Activated CD4-positive, alpha-beta memory T cell treated with anti-CD3 and anti-CD28 coated beads, Interleukin-2, amount 10 ng/mL, durations not matched to agents 7 days and 5 days (primary cell): ENCODE measurements at regions of chr20 and their contacts with region 1.

Region 1: DNA sequence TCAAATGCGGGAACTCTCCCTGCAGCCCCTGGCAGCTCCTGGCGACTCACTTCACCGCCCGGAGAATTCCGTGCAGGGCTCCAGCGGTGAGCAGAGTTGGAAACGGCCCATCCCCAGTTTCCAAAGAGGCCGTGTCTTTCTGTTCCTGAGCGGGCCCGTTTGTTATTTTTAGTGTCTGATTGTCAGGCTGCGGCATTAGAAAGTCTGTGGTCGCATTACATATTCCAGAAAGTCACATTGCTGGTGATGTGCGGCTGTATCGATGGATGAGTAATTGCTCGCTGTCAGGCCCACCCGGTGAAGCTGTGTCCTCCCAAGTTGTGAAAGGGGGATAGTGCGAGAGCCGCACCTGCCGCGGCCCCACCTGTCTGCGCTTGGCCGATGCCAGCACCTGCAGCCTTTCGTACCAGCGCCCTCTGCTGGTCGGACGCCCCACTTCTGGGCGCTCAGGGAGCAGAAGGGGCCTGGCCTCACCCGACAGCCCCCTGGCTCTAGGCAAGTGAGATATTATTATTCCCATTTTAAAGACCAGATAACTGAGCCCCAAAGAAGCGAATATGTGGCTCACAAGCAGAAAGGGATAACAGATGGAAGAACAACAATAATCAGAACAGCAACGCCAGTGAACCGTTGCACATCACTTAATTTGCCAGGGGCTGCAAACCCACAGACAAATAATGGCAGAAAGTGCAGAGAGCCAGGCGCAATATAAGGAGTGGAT is 244.9 kb downstream of the TSHZ2 start:
- DNase-seq: peak; percentile 78
- H3K4me3 Mint-ChIP-seq: peak overlapping the region; percentile 30
- H3K27ac Mint-ChIP-seq: no peak overlapping the region
- H3K4me1 Mint-ChIP-seq: peaks cover 32% of the 10 kb centered on the region
- H3K27me3 Mint-ChIP-seq: no peaks in the 10 kb centered on the region

Region 2: DNA sequence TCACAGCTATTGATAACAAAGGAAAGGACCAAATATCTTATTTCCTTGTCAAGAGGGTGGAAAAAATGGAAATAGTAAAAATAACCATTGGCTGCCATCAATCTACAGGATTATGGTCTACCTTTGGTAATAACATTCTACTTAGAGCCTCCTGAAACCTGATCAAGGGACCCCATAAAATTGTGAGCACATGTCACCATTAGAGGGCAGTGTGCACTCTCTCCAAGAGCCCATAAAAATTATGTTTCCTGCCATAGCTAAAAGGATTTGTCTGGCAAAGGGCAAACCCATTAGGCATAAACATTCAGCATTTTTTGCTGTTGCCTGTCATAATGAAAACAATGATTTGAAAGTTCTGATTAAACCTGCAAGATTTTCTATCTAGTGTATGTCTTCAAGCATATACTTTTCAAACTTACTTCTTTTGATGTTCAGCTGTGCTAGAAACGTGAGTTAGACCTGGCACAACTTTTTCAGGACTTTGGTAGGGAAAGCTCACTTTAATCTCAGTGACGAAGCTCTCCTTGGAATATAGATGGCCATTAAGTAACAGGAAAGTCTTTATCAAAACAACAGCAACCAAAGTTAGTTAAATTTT is 904.8 kb before region 1 on chr20:
- CTCF ChIA-PET with region 1: interaction called, 23 read pairs
- POLR2A ChIA-PET with region 1: no interaction called
- DNase-seq: peak; percentile 42
- H3K4me3 Mint-ChIP-seq: no peak overlapping the region
- H3K27ac Mint-ChIP-seq: no peak overlapping the region
- H3K4me1 Mint-ChIP-seq: peaks cover 3% of the 10 kb centered on the region
- H3K27me3 Mint-ChIP-seq: no peaks in the 10 kb centered on the region

Region 3: GRCh38 chr20:53077373-53078205 is 139.4 kb before region 1 on chr20:
- CTCF ChIA-PET with region 1: no interaction called
- POLR2A ChIA-PET with region 1: no interaction called
- DNase-seq: no peak
- H3K4me3 Mint-ChIP-seq: no peak overlapping the region
- H3K27ac Mint-ChIP-seq: no peak overlapping the region
- H3K4me1 Mint-ChIP-seq: peaks cover 29% of the 10 kb centered on the region
- H3K27me3 Mint-ChIP-seq: no peaks in the 10 kb centered on the region

Region 4: GRCh38 chr20:53202777-53203176 is 14.2 kb before region 1 on chr20:
- CTCF ChIA-PET with region 1: interaction called, 11 read pairs
- POLR2A ChIA-PET with region 1: no interaction called
- DNase-seq: no peak
- H3K4me3 Mint-ChIP-seq: no peak overlapping the region
- H3K27ac Mint-ChIP-seq: no peak overlapping the region
- H3K4me1 Mint-ChIP-seq: peaks cover 7% of the 10 kb centered on the region
- H3K27me3 Mint-ChIP-seq: peaks cover 2% of the 10 kb centered on the region